GM12878 (cell line): ENCODE measurements at regions of chr21 and their contacts with region 1.

Region 1: DNA sequence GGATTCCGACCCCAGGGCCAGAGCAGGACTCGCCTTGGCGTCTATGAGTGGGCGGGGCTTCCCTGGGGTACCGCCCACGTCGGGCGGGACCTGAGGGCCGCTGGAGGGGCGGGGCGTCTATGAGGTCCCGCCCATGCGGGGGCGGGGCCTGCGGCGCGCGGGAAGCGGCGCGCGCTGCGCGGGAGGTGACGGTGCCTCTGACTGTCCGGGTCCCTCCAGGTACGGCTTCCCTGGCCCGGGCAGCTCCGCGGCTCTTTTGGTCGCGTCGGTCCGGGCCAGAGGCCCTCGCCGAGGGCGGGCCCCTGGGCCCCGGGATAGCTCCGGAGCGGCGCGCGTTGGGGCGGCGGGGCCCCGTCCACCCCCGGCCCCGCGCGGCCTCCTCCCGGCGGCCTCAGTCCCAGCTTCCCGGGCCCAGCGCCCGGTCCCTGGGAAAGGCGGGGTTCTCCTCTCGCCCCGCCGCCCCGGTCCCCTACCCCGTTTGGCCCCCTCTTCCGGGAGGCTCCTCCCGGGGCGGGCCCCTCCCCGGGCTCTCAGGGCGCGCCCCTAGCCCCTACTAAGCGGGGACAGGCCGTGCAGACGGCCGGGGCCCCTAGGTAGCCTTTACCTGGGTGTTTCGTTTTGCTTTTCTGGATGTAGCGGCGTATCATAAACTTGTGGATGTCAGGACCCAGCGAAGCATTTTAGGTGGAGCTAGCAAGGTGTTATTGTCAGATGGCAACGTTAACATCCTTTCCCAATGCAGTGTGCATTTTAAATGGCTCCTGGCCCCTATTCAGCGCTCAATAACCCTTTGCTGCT is at the start of gene CHAF1B:
- DNase-seq: no peak
- ATAC-seq: peak; percentile 96
- H3K4me3 ChIP-seq: peak within 1 kb of the TSS; percentile 90
- H3K27ac ChIP-seq: peak within 1 kb of the TSS; percentile 55
- H3K4me1 ChIP-seq: no peaks in the 10 kb centered on the region; the same call in 1 of the 2 replicates
- H3K27me3 ChIP-seq: no peaks in the 10 kb centered on the region
- CTCF ChIP-seq: no peak
- EP300 ChIP-seq: no peak
- POLR2A ChIP-seq: peak; percentile 84
- RAD21 ChIP-seq: no peak
- polyA plus RNA-seq, gene CHAF1B: 5.9 TPM

Region 2: DNA sequence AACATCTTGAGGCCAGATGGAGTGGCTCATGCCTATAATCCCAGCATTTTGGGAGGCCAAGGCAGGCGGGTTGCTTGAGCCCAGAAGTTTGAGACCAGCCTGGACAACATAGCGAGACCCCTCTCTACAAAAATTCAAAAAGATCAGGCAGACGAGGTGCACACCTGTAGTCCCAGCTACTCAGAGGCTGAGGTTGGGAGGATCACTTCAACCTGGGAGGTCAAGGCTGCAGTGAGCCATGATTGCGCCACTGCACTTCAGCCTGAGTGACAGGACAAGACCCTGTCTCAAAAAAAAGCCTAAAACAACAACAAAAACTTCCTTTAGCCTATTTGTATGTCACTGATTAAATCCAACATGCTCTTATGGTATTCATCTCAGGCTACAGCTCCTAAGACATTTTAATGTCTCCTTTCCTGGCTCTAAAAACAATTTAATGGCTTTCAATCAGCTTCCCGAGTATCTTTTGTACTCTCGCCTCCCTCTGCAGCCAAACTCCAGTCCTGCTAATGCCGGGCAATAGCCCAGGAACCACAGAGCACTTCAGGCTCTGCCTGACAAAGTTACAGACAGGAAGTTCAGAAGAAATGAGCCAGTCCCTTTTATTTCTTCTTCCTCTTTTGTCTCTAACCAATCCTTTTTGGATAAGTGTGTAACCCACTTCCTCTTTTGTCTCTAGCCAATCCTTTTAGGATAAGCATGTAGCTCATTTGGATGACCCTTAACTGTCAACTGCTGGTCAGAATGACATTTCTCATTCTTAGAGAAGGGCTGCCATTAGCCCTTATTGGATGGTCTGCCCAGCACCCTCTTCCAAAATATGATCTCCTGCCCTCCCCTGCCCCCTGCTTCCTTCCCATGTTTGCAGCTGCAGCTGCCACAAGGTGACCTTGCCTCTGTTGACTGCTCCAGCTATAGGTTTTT is 235.4 kb before region 1 on chr21:
- CTCF ChIA-PET with region 1: interaction called, 5 read pairs
- POLR2A ChIA-PET with region 1: no interaction called
- RAD21 ChIA-PET with region 1: no interaction called
- SMC1A ChIA-PET with region 1: interaction called, 6 read pairs
- in situ Hi-C with region 1: no loop called
- intact Hi-C with region 1: loop called (anchors 5 kb)
- DNase-seq: peak; percentile 42
- ATAC-seq: peak; percentile 92
- H3K4me3 ChIP-seq: no peak overlapping the region
- H3K27ac ChIP-seq: no peak overlapping the region
- H3K4me1 ChIP-seq: peaks cover 10% of the 10 kb centered on the region
- H3K27me3 ChIP-seq: no peaks in the 10 kb centered on the region
- CTCF ChIP-seq: no peak
- EP300 ChIP-seq: no peak
- POLR2A ChIP-seq: peak; percentile 67
- RAD21 ChIP-seq: no peak

Region 3: GRCh38 chr21:36232641-36233040 is 152.8 kb before region 1 on chr21:
- CTCF ChIA-PET with region 1: no interaction called
- POLR2A ChIA-PET with region 1: no interaction called
- RAD21 ChIA-PET with region 1: no interaction called
- SMC1A ChIA-PET with region 1: no interaction called
- in situ Hi-C with region 1: no loop called
- intact Hi-C with region 1: no loop called
- DNase-seq: no peak
- ATAC-seq: no peak
- H3K4me3 ChIP-seq: no peak overlapping the region
- H3K27ac ChIP-seq: no peak overlapping the region
- H3K4me1 ChIP-seq: peaks cover 6% of the 10 kb centered on the region
- H3K27me3 ChIP-seq: no peaks in the 10 kb centered on the region
- CTCF ChIP-seq: no peak
- EP300 ChIP-seq: no peak
- POLR2A ChIP-seq: no peak
- RAD21 ChIP-seq: no peak

Region 4: GRCh38 chr21:36528716-36529115 is 143.3 kb after region 1 on chr21:
- CTCF ChIA-PET with region 1: no interaction called
- POLR2A ChIA-PET with region 1: no interaction called
- RAD21 ChIA-PET with region 1: no interaction called
- SMC1A ChIA-PET with region 1: no interaction called
- in situ Hi-C with region 1: no loop called
- intact Hi-C with region 1: no loop called
- DNase-seq: no peak
- ATAC-seq: no peak
- H3K4me3 ChIP-seq: no peak overlapping the region
- H3K27ac ChIP-seq: no peak overlapping the region
- H3K4me1 ChIP-seq: no peaks in the 10 kb centered on the region
- H3K27me3 ChIP-seq: no peaks in the 10 kb centered on the region
- CTCF ChIP-seq: no peak
- EP300 ChIP-seq: no peak
- POLR2A ChIP-seq: no peak
- RAD21 ChIP-seq: no peak

Region 5: DNA sequence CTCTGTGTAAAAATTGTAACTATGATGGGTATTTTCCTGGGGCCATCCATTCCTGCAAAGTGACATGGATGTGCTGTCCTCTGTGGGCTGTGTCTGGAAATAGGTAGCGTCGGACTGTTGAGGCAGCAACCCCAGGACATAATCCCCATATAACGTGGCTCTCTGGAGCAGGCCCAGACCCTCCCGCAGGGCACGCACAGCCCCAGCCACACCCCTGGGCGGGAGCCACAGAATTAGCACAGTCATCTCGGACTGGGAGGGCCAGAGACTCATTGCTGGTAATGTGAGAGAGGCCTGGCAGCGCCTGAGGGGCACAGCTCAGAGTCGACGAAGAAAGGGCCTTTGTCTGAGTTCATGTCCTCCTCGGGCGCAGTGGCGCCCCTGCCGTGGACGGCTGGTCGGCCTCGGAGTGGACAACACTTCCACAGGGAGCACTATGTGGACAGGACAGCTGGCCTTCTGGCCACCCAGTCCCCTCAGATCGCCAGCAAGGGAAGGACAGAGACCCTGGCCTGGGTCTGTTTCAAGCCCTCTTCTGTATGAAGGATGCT is 333.6 kb after region 1 on chr21:
- CTCF ChIA-PET with region 1: no interaction called
- POLR2A ChIA-PET with region 1: no interaction called
- RAD21 ChIA-PET with region 1: no interaction called
- SMC1A ChIA-PET with region 1: no interaction called
- in situ Hi-C with region 1: no loop called
- intact Hi-C with region 1: no loop called
- DNase-seq: no peak
- ATAC-seq: peak; percentile 45; the same call in 1 of the 3 replicates
- H3K4me3 ChIP-seq: no peak overlapping the region
- H3K27ac ChIP-seq: no peak overlapping the region
- H3K4me1 ChIP-seq: no peaks in the 10 kb centered on the region
- H3K27me3 ChIP-seq: peaks cover 0 to 4% of the 10 kb centered on the region in 2 experiments; a peak in 3 of 4 replicates
- CTCF ChIP-seq: no peak
- EP300 ChIP-seq: no peak
- POLR2A ChIP-seq: no peak
- RAD21 ChIP-seq: no peak